ENCODE measurements at regions of chr10 and their contacts with region 1.

Region 1: DNA sequence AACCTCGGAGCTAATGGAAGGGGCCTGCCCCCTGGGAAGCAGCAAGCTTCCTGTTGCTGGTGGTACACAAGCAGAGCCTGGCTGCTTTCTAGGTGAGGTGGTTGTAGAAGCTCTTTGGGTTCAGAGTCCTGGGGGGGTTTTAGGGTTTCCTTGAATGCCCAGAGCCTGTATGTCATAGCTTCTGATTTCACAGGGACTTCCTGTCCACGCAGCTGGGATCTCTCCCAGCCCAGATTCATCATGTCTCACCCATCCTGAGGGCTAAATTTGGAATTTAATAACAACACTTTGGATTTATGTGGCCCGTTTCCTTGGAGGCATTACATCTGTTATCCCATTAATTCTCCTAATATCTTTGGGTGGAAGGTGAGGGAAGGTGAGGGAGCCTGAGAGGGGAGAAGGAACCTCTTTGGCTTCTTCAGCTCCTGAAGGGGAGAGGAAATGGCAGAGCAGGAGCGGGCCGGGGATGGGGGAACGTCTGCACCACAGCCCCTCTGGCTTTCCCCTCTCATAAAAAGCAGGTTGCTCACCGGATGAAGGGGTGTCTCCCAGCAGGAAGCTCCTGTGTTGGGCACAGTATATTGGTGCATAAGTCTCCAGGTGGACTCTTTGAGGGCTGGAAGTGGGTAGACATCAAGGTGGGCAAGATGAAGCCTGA is 19.7 kb downstream of the RPS24 start:
- ATAC-seq: no peak
- H3K4me3 ChIP-seq: no peak overlapping the region
- H3K27ac ChIP-seq: no peak overlapping the region
- H3K4me1 ChIP-seq: peaks cover under 1 to 2% of the 10 kb centered on the region in 2 donors

Region 2: GRCh38 chr10:78278058-78278404 is 224.7 kb after region 1 on chr10:
- in situ Hi-C with region 1: loop called in 1 of 9 experiments (anchors 25 kb)
- ATAC-seq: peak in 7 of 8 experiments; percentile 73 to 94 (median 89)
- H3K4me3 ChIP-seq: no peak overlapping the region
- H3K27ac ChIP-seq: peak overlapping the region; percentile 66 to 73
- H3K4me1 ChIP-seq: peaks cover 35 to 42% of the 10 kb centered on the region in 2 donors

Region 3: DNA sequence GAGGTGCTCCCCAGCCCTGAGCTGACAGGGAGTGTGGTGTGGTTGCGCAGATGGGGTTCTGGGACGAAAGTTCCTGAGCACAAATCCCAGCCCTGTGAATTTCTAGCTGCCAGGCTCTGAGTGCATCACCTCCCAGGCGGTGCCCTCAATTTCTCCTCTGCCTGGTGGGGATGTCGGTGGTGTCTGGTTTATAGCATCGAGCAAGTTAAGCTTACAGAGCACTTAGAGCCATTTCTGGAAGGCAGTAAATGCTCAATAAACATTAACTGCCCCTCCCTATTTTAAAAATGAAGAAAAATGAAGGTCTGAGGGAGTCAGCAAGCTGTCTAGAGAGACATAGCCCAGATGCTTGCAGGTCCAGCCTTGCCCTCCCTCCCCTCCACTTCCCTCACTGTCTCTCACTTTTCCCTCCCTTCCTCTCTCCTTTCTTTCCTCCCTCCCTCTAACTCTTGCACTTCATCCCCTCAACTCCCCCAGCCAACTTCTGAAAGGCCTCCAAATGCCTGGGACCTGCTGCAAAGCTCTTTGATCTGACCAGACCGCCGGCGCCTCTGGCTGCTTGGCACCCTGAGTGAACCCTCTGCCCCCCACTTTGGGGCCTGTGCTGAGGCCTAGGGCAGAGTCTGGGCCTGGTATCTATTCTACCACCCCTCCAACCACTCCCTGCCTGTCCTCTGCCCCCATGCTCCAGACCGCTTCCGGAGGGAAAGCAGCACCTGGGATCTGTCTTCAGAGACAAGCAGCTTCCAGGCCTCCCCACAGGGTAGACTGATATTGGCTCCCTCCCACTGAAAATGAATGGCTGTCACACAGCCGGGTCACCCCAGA is 418.6 kb after region 1 on chr10:
- in situ Hi-C with region 1: no loop called
- ATAC-seq: peak in 5 of 8 experiments; percentile 30 to 59 (median 55)
- H3K4me3 ChIP-seq: no peak overlapping the region
- H3K27ac ChIP-seq: peak overlapping the region; percentile 64 to 78
- H3K4me1 ChIP-seq: peaks cover 28 to 41% of the 10 kb centered on the region in 2 donors

Region 4: GRCh38 chr10:79202188-79203013 is 1149.1 kb after region 1 on chr10:
- in situ Hi-C with region 1: loop called in 5 of 9 experiments (anchors 10 to 25 kb)
- ATAC-seq: peak in 7 of 8 experiments; percentile 18 to 69 (median 51)
- H3K4me3 ChIP-seq: no peak overlapping the region
- H3K27ac ChIP-seq: no peak overlapping the region
- H3K4me1 ChIP-seq: no peaks in the 10 kb centered on the region

Measured in motor neuron (in vitro differentiated cells).